ENCODE measurements at regions of chr2 and their contacts with region 1.

Region 1: DNA sequence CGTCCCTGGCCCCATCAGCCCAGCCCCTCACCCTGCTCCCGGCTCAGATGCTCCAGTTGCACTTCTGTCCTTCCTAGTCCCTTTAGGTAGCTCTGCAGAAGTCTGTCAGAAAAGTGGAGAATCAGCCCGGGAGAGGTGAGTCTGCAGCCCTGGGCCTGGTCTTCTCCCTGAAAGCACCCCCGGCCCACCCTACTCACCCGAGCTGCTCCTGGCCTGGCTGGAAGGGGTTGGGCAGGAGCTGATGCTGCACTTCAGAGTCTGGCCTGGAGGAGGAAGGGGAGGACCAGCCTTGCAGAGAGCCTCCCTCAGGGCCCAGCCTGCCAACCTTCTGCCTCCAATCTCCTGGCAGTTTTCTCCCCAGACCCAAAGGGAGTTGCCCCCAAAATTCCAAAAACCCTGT is 15.8 kb downstream of the KHK start:
- DNase-seq: no peak
- CTCF ChIP-seq: no peak

Region 2: GRCh38 chr2:27281855-27282559 is 179.7 kb after region 1 on chr2 and contains the start of gene TRIM54:
- in situ Hi-C with region 1: loop called (anchors 10 kb)
- DNase-seq: no peak
- CTCF ChIP-seq: no peak